HepG2 (cell line): ENCODE measurements at regions of chr22 and their contacts with region 1.

Region 1: GRCh38 chr22:25540166-25540907 is 24.1 kb upstream of the GRK3 start:
- DNase-seq: no peak
- ATAC-seq: no peak
- H3K4me3 ChIP-seq: no peak overlapping the region
- H3K27ac ChIP-seq: no peak overlapping the region
- H3K4me1 ChIP-seq: peaks cover 27% of the 10 kb centered on the region
- H3K27me3 ChIP-seq: no peaks in the 10 kb centered on the region; a peak in 1 of 5 replicates
- CTCF ChIP-seq: no peak
- EP300 ChIP-seq: no peak
- POLR2A ChIP-seq: no peak
- RAD21 ChIP-seq: no peak

Region 2: GRCh38 chr22:25554238-25554671 is 13.9 kb after region 1 on chr22:
- CTCF ChIA-PET with region 1: no interaction called
- POLR2A ChIA-PET with region 1: no interaction called
- in situ Hi-C with region 1: no loop called
- intact Hi-C with region 1: no loop called
- DNase-seq: no peak
- ATAC-seq: peak; percentile 87
- H3K4me3 ChIP-seq: 0 out of 6 replicates have a peak overlapping the region, but pooled peaks of 1 of the 3 experiments have one; percentile 2
- H3K27ac ChIP-seq: peak overlapping the region; percentile 21
- H3K4me1 ChIP-seq: peaks cover 20% of the 10 kb centered on the region
- H3K27me3 ChIP-seq: peaks cover 0 to 1% of the 10 kb centered on the region in 2 experiments; a peak in 1 of 5 replicates
- CTCF ChIP-seq: no peak
- EP300 ChIP-seq: peak in 1 of 2 experiments; percentile 35; a peak in 1 of 4 replicates
- POLR2A ChIP-seq: no peak
- RAD21 ChIP-seq: no peak

Region 3: GRCh38 chr22:25774575-25775026 is 234.3 kb after region 1 on chr22:
- CTCF ChIA-PET with region 1: no interaction called
- POLR2A ChIA-PET with region 1: no interaction called
- in situ Hi-C with region 1: no loop called
- intact Hi-C with region 1: loop called (anchors 5 kb)
- DNase-seq: no peak
- ATAC-seq: peak; percentile 77
- H3K4me3 ChIP-seq: no peak overlapping the region
- H3K27ac ChIP-seq: no peak overlapping the region
- H3K4me1 ChIP-seq: 0 out of 2 replicates have a peak, but pooled peaks cover 6% of the 10 kb centered on the region
- H3K27me3 ChIP-seq: peaks cover 2 to 18% of the 10 kb centered on the region in 2 experiments; a peak in 3 of 5 replicates
- CTCF ChIP-seq: peak; percentile 91
- EP300 ChIP-seq: no peak
- POLR2A ChIP-seq: no peak
- RAD21 ChIP-seq: peak; percentile 60